Activated CD4-positive, alpha-beta memory T cell treated with anti-CD3 and anti-CD28 coated beads for 36 hours (primary cell): ENCODE measurements at regions of chr3 and their contacts with region 1.

Region 1: GRCh38 chr3:128123538-128124368 is at the start of gene RUVBL1:
- DNase-seq: peak; percentile 99
- H3K4me3 Mint-ChIP-seq: peak within 1 kb of the TSS; percentile 97
- H3K27ac Mint-ChIP-seq: peak within 1 kb of the TSS; percentile 85
- H3K4me1 Mint-ChIP-seq: peaks cover 31% of the 10 kb centered on the region
- H3K27me3 Mint-ChIP-seq: no peaks in the 10 kb centered on the region
- total RNA-seq, gene RUVBL1: 81.6 to 87.0 TPM

Region 2: DNA sequence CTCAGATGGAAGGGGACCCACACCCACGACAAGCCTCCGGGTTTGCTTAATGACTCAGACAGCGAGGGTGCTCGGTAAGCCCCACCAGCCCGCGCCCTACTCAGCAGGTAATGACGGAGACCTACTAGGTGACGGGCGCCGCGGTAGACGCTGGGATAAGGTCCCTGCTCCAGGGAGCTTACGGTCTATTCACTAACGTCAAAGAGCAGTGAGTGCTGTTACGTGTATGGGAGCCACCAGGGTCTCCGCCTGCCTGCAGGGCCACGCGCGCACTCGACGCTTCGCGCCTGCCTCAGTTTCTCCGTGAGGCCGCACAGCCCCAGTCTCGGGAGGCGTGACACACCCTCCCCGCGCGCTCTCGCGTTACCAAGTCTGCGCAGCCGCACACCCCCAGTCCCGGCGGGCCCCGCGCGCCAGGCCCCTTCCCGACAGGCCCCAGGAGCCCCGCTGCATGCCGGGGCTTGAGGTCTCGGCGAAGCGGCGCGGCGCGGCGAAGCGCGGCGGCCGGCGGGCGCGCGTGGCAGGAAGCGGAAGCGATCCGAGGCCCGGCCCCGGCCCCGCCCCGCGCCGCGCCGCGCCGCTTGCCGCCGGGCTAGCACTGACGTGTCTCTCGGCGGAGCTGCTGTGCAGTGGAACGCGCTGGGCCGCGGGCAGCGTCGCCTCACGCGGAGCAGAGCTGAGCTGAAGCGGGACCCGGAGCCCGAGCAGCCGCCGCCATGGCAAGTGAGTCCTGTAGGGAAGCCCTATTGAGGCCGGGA is 71.7 kb before region 1 on chr3 and contains the start of gene SEC61A1:
- CTCF ChIA-PET with region 1: no interaction called
- POLR2A ChIA-PET with region 1: interaction called, 4 read pairs
- intact Hi-C with region 1: loop called (anchors 2 kb)
- DNase-seq: peak; percentile 97
- H3K4me3 Mint-ChIP-seq: peak within 1 kb of the TSS; percentile 98
- H3K27ac Mint-ChIP-seq: peak within 1 kb of the TSS; percentile 90
- H3K4me1 Mint-ChIP-seq: peaks cover 36% of the 10 kb centered on the region
- H3K27me3 Mint-ChIP-seq: no peaks in the 10 kb centered on the region
- total RNA-seq, gene SEC61A1: 147 to 149 TPM

Region 3: GRCh38 chr3:128095222-128095703 is 28.5 kb before region 1 on chr3:
- CTCF ChIA-PET with region 1: interaction called, 17 read pairs
- POLR2A ChIA-PET with region 1: interaction called, 3 read pairs
- intact Hi-C with region 1: no loop called
- DNase-seq: peak; percentile 84
- H3K4me3 Mint-ChIP-seq: no peak overlapping the region
- H3K27ac Mint-ChIP-seq: no peak overlapping the region
- H3K4me1 Mint-ChIP-seq: peaks cover 4% of the 10 kb centered on the region
- H3K27me3 Mint-ChIP-seq: no peaks in the 10 kb centered on the region

Region 4: DNA sequence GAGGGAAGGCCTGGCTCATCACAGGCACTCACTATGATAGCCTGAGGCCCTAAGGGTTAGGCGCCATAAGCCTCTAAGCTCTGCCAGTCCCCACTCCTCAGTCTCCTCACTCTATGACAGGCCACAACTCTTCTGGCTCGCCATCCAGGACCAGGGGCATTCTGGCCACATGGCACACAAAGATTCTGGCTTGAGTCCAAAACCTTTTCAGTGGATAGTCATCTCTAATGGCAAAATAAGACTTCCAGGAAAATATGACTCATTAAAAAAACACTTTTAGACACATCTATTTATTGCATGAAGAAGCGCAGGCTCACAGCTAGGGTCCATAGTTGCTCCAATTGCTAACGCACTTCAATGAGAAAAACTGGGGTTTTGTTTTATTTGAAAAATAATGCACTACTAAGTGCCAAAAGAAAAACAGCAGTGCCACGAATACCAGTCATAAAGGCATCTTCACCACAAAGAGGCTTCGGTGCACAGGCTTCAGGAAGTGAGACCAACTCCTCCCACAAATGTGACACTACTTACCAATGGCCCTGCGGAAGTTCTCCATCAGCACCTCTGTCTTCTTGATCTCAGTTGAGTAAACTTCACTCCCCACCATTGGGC is 11.3 kb before region 1 on chr3:
- CTCF ChIA-PET with region 1: interaction called, 8 read pairs
- POLR2A ChIA-PET with region 1: interaction called, 31 read pairs
- intact Hi-C with region 1: loop called (anchors 1 kb)
- DNase-seq: peak; percentile 76
- H3K4me3 Mint-ChIP-seq: peak overlapping the region; percentile 30
- H3K27ac Mint-ChIP-seq: peak overlapping the region; percentile 95
- H3K4me1 Mint-ChIP-seq: peaks cover 45% of the 10 kb centered on the region
- H3K27me3 Mint-ChIP-seq: no peaks in the 10 kb centered on the region

Region 5: GRCh38 chr3:128153156-128154041 is 29.6 kb after region 1 on chr3 and contains the start of gene EEFSEC:
- CTCF ChIA-PET with region 1: interaction called, 9 read pairs
- POLR2A ChIA-PET with region 1: interaction called, 32 read pairs
- intact Hi-C with region 1: loop called (anchors 1 kb)
- DNase-seq: peak; percentile 91
- H3K4me3 Mint-ChIP-seq: peak within 1 kb of the TSS; percentile 85
- H3K27ac Mint-ChIP-seq: peak within 1 kb of the TSS; percentile 78
- H3K4me1 Mint-ChIP-seq: peaks cover 18% of the 10 kb centered on the region
- H3K27me3 Mint-ChIP-seq: no peaks in the 10 kb centered on the region
- total RNA-seq, gene EEFSEC: 16.1 to 17.2 TPM